MCF 10A (cell line): ENCODE measurements at regions of chr6 and their contacts with region 1.

Region 1: GRCh38 chr6:41027799-41028628 is 11.0 kb downstream of the UNC5CL start:
- DNase-seq: peak; percentile 79
- H3K4me3 Mint-ChIP-seq: peak overlapping the region; percentile 61
- H3K27ac Mint-ChIP-seq: no peak overlapping the region
- H3K4me1 Mint-ChIP-seq: peaks cover 29% of the 10 kb centered on the region
- H3K27me3 Mint-ChIP-seq: no peaks in the 10 kb centered on the region
- CTCF ChIP-seq: peak; percentile 98

Region 2: DNA sequence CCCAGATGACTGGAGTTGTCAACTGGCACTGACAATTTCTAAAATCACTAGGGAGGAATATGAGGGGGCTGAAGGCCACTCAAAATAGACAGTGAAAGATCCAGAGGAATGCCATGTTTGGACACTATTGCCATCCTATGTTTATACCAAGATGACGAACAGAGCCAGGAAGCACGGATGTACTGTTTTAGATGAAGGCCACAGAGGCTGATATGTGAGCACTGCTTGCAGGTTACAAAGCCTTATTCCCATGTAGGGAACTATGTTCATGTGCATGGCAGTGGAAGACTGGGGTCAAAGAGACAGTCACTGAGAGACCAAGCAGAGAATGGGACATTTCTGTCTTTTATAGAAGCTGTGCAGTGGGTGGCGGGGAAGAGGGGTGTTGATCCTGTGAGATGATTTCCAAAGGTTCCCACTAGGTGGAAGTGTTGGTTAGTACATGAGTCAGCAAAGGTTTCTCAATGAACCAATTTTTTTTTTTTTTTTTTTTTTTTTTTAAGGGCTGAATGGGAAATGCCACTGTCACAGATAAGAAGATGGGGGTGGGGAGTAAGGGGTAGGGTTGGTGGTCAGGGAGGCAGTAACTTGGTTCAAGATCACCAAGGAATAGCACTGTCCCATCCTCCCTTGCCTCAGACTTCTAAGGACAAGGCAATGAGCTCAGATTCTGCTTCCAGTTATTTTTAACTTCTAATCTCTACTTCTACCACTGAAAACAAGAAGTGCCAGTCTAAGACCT is 1047.0 kb before region 1 on chr6:
- CTCF ChIA-PET with region 1: interaction called, 24 read pairs
- POLR2A ChIA-PET with region 1: no interaction called
- intact Hi-C with region 1: loop called (anchors 2 kb)
- DNase-seq: peak; percentile 63
- H3K4me3 Mint-ChIP-seq: no peak overlapping the region
- H3K27ac Mint-ChIP-seq: no peak overlapping the region
- H3K4me1 Mint-ChIP-seq: no peaks in the 10 kb centered on the region
- H3K27me3 Mint-ChIP-seq: no peaks in the 10 kb centered on the region
- CTCF ChIP-seq: peak; percentile 46

Region 3: GRCh38 chr6:40912158-40912946 is 115.7 kb before region 1 on chr6:
- CTCF ChIA-PET with region 1: interaction called, 17 read pairs
- POLR2A ChIA-PET with region 1: interaction called, 7 read pairs
- intact Hi-C with region 1: no loop called
- DNase-seq: peak; percentile 89
- H3K4me3 Mint-ChIP-seq: no peak overlapping the region
- H3K27ac Mint-ChIP-seq: no peak overlapping the region
- H3K4me1 Mint-ChIP-seq: peaks cover 11% of the 10 kb centered on the region
- H3K27me3 Mint-ChIP-seq: no peaks in the 10 kb centered on the region
- CTCF ChIP-seq: peak; percentile 51

Region 4: DNA sequence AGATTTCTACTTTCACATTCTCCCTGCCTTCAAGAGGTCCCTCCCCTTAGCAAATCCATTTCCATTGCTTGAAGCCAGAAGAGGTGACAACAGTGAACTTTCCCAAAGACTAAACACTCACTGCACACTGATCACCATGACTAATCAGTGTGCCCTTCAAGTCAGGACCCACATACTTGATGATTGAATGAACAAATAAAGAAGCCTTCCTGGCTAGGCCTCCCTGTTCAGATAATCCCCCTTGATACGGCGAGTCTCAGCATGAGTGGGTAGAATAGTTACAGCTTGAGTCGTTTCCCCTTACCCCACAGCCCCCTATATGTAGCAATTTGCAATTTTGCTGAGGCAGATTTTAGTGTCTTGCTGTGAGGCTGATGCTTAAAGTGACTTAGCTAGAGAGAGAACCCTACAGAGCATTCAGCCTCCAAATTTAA is 91.2 kb before region 1 on chr6:
- CTCF ChIA-PET with region 1: no interaction called
- POLR2A ChIA-PET with region 1: no interaction called
- intact Hi-C with region 1: no loop called
- DNase-seq: no peak
- H3K4me3 Mint-ChIP-seq: no peak overlapping the region
- H3K27ac Mint-ChIP-seq: no peak overlapping the region
- H3K4me1 Mint-ChIP-seq: peaks cover 8% of the 10 kb centered on the region
- H3K27me3 Mint-ChIP-seq: no peaks in the 10 kb centered on the region
- CTCF ChIP-seq: no peak

Region 5: GRCh38 chr6:41008011-41008410 is 20.0 kb before region 1 on chr6:
- CTCF ChIA-PET with region 1: interaction called, 20 read pairs
- POLR2A ChIA-PET with region 1: no interaction called
- intact Hi-C with region 1: loop called (anchors 1 kb)
- DNase-seq: no peak
- H3K4me3 Mint-ChIP-seq: no peak overlapping the region
- H3K27ac Mint-ChIP-seq: no peak overlapping the region
- H3K4me1 Mint-ChIP-seq: no peaks in the 10 kb centered on the region
- H3K27me3 Mint-ChIP-seq: peaks cover 10% of the 10 kb centered on the region
- CTCF ChIP-seq: no peak

Region 6: DNA sequence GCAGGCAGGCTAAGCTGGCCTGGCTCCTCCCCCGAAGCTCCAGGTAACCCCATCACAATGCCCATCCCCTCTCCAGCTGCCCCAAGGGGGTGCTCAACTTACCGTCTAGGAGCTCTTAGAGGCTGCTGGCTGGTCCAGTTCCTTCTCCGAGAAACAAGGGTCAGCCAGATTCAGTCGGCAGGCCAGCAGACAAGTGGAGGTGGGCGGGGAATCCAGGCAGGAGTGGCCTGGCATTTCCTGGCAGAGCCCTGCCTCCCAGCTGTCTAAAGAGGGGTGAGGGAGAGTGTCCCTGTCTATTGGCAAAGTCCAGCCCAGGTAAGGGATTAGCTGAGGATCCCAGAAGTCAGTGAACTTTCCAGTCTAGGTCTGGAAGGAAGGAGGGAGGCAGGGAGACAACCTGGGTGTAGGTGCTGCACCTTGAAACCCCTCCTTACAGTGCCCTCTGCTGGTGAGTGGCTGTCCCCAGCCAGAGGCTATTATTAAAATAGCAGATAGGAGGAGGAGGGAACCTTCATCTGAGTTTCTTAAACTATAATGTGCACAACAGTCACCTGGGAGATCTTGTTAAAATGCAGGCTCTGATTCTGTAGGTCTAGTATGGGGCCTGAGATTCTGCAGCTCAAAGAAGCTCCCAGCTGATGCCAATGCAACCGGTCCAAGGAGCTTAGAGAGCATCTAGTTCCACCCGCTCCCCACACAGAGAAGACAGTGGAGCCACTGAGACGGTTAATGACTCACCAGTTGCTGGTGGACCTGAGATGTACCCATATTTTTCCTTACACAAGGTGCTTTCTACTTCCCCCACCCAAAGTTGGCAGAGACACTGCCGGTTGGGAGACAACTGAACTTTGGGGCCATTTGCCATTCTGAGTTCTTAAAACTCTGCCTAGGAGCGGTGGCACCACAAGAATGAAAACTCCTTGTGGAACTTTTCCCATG is 11.3 kb after region 1 on chr6 and contains the start of gene UNC5CL:
- CTCF ChIA-PET with region 1: interaction called, 43 read pairs
- POLR2A ChIA-PET with region 1: interaction called, 9 read pairs
- intact Hi-C with region 1: no loop called
- DNase-seq: peak; percentile 76
- H3K4me3 Mint-ChIP-seq: no peak within 1 kb of the TSS
- H3K27ac Mint-ChIP-seq: peak within 1 kb of the TSS; percentile 85
- H3K4me1 Mint-ChIP-seq: peaks cover 43% of the 10 kb centered on the region
- H3K27me3 Mint-ChIP-seq: no peaks in the 10 kb centered on the region
- CTCF ChIP-seq: peak; percentile 66
- total RNA-seq, gene UNC5CL: 0.19 and 0.59 TPM in 2 replicates